IMR-90 (cell line): ENCODE measurements at regions of chr10 and their contacts with region 1.

Region 1: GRCh38 chr10:44932517-44933450 is 21.6 kb downstream of the TMEM72 start:
- DNase-seq: peak; percentile 81
- ATAC-seq: peak; percentile 94
- H3K4me3 ChIP-seq: no peak overlapping the region
- H3K27ac ChIP-seq: no peak overlapping the region
- H3K4me1 ChIP-seq: peaks cover 15% of the 10 kb centered on the region
- H3K27me3 ChIP-seq: no peaks in the 10 kb centered on the region; the same call in 1 of the 2 replicates
- CTCF ChIP-seq: peak; percentile 95
- POLR2A ChIP-seq: no peak
- RAD21 ChIP-seq: peak; percentile 94

Region 2: GRCh38 chr10:44920252-44920651 is 12.5 kb before region 1 on chr10:
- CTCF ChIA-PET with region 1: interaction called, 11 read pairs
- POLR2A ChIA-PET with region 1: no interaction called
- dilution Hi-C with region 1: no loop called
- in situ Hi-C with region 1: no loop called
- intact Hi-C with region 1: no loop called
- DNase-seq: no peak
- ATAC-seq: no peak
- H3K4me3 ChIP-seq: no peak overlapping the region
- H3K27ac ChIP-seq: no peak overlapping the region
- H3K4me1 ChIP-seq: no peaks in the 10 kb centered on the region
- H3K27me3 ChIP-seq: peaks cover 52% of the 10 kb centered on the region
- CTCF ChIP-seq: no peak
- POLR2A ChIP-seq: no peak
- RAD21 ChIP-seq: no peak

Region 3: GRCh38 chr10:44974628-44975431 is 42.0 kb after region 1 on chr10:
- CTCF ChIA-PET with region 1: interaction called, 4 read pairs
- POLR2A ChIA-PET with region 1: no interaction called
- dilution Hi-C with region 1: no loop called
- in situ Hi-C with region 1: no loop called
- intact Hi-C with region 1: loop called (anchors 1 kb)
- DNase-seq: no peak
- ATAC-seq: peak; percentile 89
- H3K4me3 ChIP-seq: peak overlapping the region; percentile 22
- H3K27ac ChIP-seq: peak overlapping the region; percentile 78
- H3K4me1 ChIP-seq: peaks cover 41% of the 10 kb centered on the region
- H3K27me3 ChIP-seq: no peaks in the 10 kb centered on the region
- CTCF ChIP-seq: peak; percentile 93
- POLR2A ChIP-seq: peak; percentile 24; the same call in 1 of the 2 replicates
- RAD21 ChIP-seq: peak; percentile 71

Region 4: GRCh38 chr10:45000752-45001380 is 68.1 kb after region 1 on chr10 and contains the start of gene ZNF22:
- CTCF ChIA-PET with region 1: interaction called, 7 read pairs
- POLR2A ChIA-PET with region 1: no interaction called
- dilution Hi-C with region 1: no loop called
- in situ Hi-C with region 1: no loop called
- intact Hi-C with region 1: loop called (anchors 2 kb)
- DNase-seq: peak; percentile 56
- ATAC-seq: peak; percentile 82
- H3K4me3 ChIP-seq: peak within 1 kb of the TSS; percentile 51
- H3K27ac ChIP-seq: peak within 1 kb of the TSS; percentile 74
- H3K4me1 ChIP-seq: peaks cover 21% of the 10 kb centered on the region
- H3K27me3 ChIP-seq: no peaks in the 10 kb centered on the region
- CTCF ChIP-seq: 0 out of 2 replicates have a peak, but pooled peaks have one; percentile 6
- POLR2A ChIP-seq: peak; percentile 68; the same call in 1 of the 2 replicates
- RAD21 ChIP-seq: no peak
- total RNA-seq, gene ZNF22: 12.4 and 18.6 TPM in 2 replicates

Region 5: DNA sequence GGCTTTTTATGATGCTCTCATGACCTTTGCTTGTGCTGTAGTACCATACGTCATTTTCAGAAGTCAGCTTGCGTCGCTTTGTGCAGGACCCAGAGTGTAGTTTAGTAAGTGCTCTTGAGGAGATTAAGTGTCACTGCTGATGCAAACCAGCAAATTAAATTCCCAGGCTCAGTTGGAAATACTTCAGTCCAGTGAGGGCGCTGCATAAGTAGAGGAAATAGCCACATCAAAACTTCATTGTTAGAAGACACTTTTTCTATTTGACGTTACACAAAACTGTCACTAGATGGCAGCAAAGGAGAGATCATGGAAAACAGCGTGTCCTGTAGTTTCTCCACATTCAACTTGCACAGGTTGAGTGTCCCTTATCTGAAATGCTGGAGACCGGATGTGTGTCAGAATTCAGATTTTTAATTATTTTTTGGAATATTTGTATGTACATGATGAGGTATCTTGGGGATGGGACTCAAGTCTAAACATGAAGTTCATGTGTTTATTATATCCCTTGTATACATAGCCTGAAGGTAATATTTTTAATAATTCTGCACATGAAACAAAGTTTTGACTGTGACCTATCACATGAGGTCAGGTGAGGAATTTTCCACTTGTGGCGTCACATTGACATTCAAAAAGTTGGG is 75.9 kb after region 1 on chr10:
- CTCF ChIA-PET with region 1: interaction called, 7 read pairs
- POLR2A ChIA-PET with region 1: no interaction called
- dilution Hi-C with region 1: no loop called
- in situ Hi-C with region 1: no loop called
- intact Hi-C with region 1: loop called (anchors 2 kb)
- DNase-seq: peak; percentile 89
- ATAC-seq: peak; percentile 97
- H3K4me3 ChIP-seq: no peak overlapping the region
- H3K27ac ChIP-seq: no peak overlapping the region
- H3K4me1 ChIP-seq: peaks cover 2% of the 10 kb centered on the region; the same call in 1 of the 2 replicates
- H3K27me3 ChIP-seq: no peaks in the 10 kb centered on the region
- CTCF ChIP-seq: peak; percentile 92
- POLR2A ChIP-seq: no peak
- RAD21 ChIP-seq: peak; percentile 87

Region 6: DNA sequence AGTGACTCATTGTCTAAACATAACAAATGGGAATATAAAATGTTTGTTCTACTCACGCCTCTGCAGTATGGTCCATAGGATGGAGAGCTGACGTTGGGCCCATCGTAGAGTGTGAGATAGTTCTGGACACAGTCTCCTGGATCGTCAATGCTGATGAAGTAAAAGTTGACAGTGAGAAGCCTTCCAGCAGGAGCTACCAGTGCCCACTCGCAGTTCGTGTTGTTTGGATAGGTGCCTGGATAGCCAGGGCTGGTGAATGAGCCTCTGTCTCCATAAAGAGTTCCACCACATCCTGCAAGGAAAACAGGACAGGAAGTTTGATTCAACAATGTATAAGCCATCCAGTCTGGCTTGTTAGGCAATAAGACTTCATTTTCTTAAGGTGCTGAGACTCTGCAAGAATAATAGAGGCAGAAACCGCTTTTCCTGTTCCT is 303.0 kb after region 1 on chr10:
- CTCF ChIA-PET with region 1: no interaction called
- POLR2A ChIA-PET with region 1: no interaction called
- dilution Hi-C with region 1: no loop called
- in situ Hi-C with region 1: no loop called
- intact Hi-C with region 1: loop called (anchors 5 kb)
- DNase-seq: peak; percentile 7
- ATAC-seq: peak; percentile 24
- H3K4me3 ChIP-seq: no peak overlapping the region
- H3K27ac ChIP-seq: no peak overlapping the region
- H3K4me1 ChIP-seq: no peaks in the 10 kb centered on the region
- H3K27me3 ChIP-seq: no peaks in the 10 kb centered on the region
- CTCF ChIP-seq: no peak
- POLR2A ChIP-seq: no peak
- RAD21 ChIP-seq: no peak

Region 7: GRCh38 chr10:45249978-45250693 is 317.4 kb after region 1 on chr10:
- CTCF ChIA-PET with region 1: no interaction called
- POLR2A ChIA-PET with region 1: no interaction called
- dilution Hi-C with region 1: no loop called
- in situ Hi-C with region 1: no loop called
- intact Hi-C with region 1: loop called (anchors 1 kb)
- DNase-seq: peak; percentile 52
- ATAC-seq: peak; percentile 77
- H3K4me3 ChIP-seq: no peak overlapping the region
- H3K27ac ChIP-seq: no peak overlapping the region
- H3K4me1 ChIP-seq: no peaks in the 10 kb centered on the region
- H3K27me3 ChIP-seq: no peaks in the 10 kb centered on the region; the same call in 1 of the 2 replicates
- CTCF ChIP-seq: peak; percentile 57
- POLR2A ChIP-seq: no peak
- RAD21 ChIP-seq: peak; percentile 52